Heart right ventricle (tissue), 16 donors: ENCODE measurements at regions of chr9 and their contacts with region 1.

Region 1: DNA sequence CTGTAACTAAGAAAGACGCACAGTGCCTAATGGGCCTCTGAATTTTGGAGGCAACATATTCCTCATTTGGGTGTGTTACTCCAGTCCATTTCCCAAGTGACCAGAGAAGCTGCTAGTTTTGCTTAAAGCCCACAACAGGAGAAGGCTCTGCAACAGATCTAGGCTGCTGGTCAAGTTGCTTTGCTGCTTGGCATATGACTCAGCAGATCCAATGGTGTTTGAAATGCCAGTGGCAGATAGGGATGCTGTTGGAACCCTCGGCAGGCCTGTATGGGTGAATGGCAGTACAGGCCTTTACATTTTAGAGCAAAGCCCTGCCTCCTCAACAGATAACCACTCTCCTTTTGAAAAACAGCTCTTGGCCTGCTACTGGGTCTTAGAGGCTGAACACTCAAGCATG is 36.2 kb upstream of the ROR2 start:
- DNase-seq: no peak
- ATAC-seq: no peak
- H3K4me3 ChIP-seq: no peak overlapping the region
- H3K27ac ChIP-seq: no peak overlapping the region
- H3K4me1 ChIP-seq: no peaks in the 10 kb centered on the region
- H3K27me3 ChIP-seq: peaks cover 0 to 10% (median under 1%) of the 10 kb centered on the region in 7 donors
- CTCF ChIP-seq: no peak

Region 2: GRCh38 chr9:91921371-91921770 is 64.9 kb before region 1 on chr9:
- intact Hi-C with region 1: loop called in 1 of 10 experiments (anchors 10 kb)
- DNase-seq: no peak
- ATAC-seq: no peak
- H3K4me3 ChIP-seq: no peak overlapping the region
- H3K27ac ChIP-seq: no peak overlapping the region
- H3K4me1 ChIP-seq: no peaks in the 10 kb centered on the region
- H3K27me3 ChIP-seq: peaks cover 0 to 20% (median 7%) of the 10 kb centered on the region in 7 donors
- CTCF ChIP-seq: no peak

Region 3: DNA sequence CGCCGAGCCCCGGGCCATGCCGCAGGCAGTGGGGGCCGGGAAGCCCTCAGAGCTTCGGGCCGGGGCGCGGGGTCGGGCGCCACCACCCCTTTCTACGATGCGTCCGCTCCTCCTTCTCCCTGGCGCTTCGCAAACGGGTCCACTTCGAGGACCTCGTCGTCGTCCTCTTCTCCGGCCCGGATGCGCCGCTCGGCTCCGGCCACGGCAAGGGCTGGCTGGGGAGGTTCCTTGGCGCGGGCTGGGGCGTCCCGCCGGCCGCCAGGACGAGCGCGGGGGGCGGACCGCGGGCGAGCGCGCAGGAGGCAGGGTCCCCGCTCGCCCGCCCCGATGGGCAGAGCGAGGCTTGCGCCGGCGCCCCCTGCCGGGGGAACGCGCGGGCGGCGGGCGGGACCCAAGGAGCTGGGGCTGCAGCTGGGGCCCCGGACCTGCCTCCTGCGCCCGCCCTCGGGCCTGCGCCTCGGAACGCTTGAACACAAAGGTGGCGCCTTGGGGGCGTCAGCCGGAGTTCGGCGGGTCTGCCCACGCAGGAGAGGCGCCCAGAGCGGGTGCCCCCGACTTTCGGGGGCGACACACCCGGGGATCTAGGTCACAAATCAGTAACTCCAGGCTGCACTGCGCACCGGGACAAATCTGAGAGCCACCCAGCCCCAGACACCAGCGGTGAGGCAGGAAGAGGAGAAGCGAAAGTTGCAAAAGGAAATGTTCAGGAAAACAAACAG is 36.1 kb before region 1 on chr9 and contains the start of gene ROR2:
- intact Hi-C with region 1: no loop called
- DNase-seq: peak; percentile 19 to 65
- ATAC-seq: peak; percentile 40 to 90 (median 78)
- H3K4me3 ChIP-seq: peak within 1 kb of the TSS; percentile 28 to 57 (median 49)
- H3K27ac ChIP-seq: peak within 1 kb of the TSS in 2 of 10 donors; percentile 13 to 75
- H3K4me1 ChIP-seq: peaks cover 0 to 33% (median 15%) of the 10 kb centered on the region in 9 donors
- H3K27me3 ChIP-seq: peaks cover 25 to 84% (median 71%) of the 10 kb centered on the region in 7 donors
- CTCF ChIP-seq: peak; percentile 27 to 61 (median 52)
- total RNA-seq, gene ROR2: 0.11 to 1.4 (median 0.43) TPM